Caco-2 (cell line): ENCODE measurements at regions of chrX and their contacts with region 1.

Region 1: DNA sequence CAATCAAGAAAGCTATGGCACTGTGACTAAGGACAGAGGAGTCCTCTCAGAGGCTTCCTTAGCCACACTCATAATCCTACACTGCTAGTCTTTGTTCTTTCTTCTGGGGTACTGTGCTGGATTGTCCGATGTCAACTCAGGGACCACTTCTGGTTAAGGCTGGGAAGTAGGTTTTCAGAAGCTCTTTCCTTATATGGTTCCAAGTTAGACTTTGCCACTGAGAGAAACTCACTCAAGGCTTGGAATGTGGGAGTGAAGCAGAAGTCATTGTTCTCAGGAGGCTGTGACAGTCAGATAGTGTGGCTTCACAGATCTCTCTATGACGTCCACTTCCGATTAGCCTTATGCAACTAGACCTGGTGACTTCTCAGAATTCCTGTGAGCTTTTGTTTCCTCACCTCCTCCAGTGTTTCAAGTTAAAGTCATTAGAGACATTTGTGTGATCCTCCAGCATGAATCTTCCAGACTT is 317.3 kb upstream of the F9 start:
- DNase-seq: peak; percentile 62 to 67
- H3K4me3 ChIP-seq: no peak overlapping the region
- H3K4me3 Mint-ChIP-seq: no peak overlapping the region
- H3K27ac Mint-ChIP-seq: peak overlapping the region; percentile 79
- H3K4me1 ChIP-seq: peaks cover 15% of the 10 kb centered on the region
- H3K4me1 Mint-ChIP-seq: peaks cover 14% of the 10 kb centered on the region
- H3K27me3 ChIP-seq: no peaks in the 10 kb centered on the region
- H3K27me3 Mint-ChIP-seq: no peaks in the 10 kb centered on the region
- CTCF ChIP-seq: no peak

Region 2: GRCh38 chrX:139141370-139141769 is 71.9 kb before region 1 on chrX:
- CTCF ChIA-PET with region 1: no interaction called
- POLR2A ChIA-PET with region 1: no interaction called
- intact Hi-C with region 1: loop called (anchors 1 kb)
- DNase-seq: no peak
- H3K4me3 ChIP-seq: no peak overlapping the region
- H3K4me3 Mint-ChIP-seq: no peak overlapping the region
- H3K27ac Mint-ChIP-seq: no peak overlapping the region
- H3K4me1 ChIP-seq: peaks cover 7% of the 10 kb centered on the region; the same call in 1 of the 2 replicates
- H3K4me1 Mint-ChIP-seq: no peaks in the 10 kb centered on the region
- H3K27me3 ChIP-seq: no peaks in the 10 kb centered on the region
- H3K27me3 Mint-ChIP-seq: no peaks in the 10 kb centered on the region
- CTCF ChIP-seq: no peak

Region 3: GRCh38 chrX:139581068-139581467 is 367.8 kb after region 1 on chrX:
- CTCF ChIA-PET with region 1: no interaction called
- POLR2A ChIA-PET with region 1: no interaction called
- intact Hi-C with region 1: loop called (anchors 1 kb)
- DNase-seq: peak; percentile 28 to 40
- H3K4me3 ChIP-seq: no peak overlapping the region
- H3K4me3 Mint-ChIP-seq: no peak overlapping the region
- H3K27ac Mint-ChIP-seq: no peak overlapping the region
- H3K4me1 ChIP-seq: peaks cover 5% of the 10 kb centered on the region; the same call in 1 of the 2 replicates
- H3K4me1 Mint-ChIP-seq: no peaks in the 10 kb centered on the region
- H3K27me3 ChIP-seq: no peaks in the 10 kb centered on the region
- H3K27me3 Mint-ChIP-seq: no peaks in the 10 kb centered on the region
- CTCF ChIP-seq: no peak